WTC11 (cell line): ENCODE measurements at regions of chr3 and their contacts with region 1.

Region 1: GRCh38 chr3:31981206-31982181 is at the starts of genes OSBPL10 and ZNF860:
- DNase-seq: peak; percentile 74
- ATAC-seq: peak; percentile 79
- H3K4me3 Mint-ChIP-seq: peak within 1 kb of the TSS; percentile 92
- H3K27ac Mint-ChIP-seq: peak within 1 kb of the TSS; percentile 84
- H3K4me1 Mint-ChIP-seq: peaks cover 37% of the 10 kb centered on the region
- H3K27me3 Mint-ChIP-seq: no peaks in the 10 kb centered on the region; the same call in 1 of the 2 replicates
- CTCF ChIP-seq: no peak
- total RNA-seq, gene OSBPL10: 81.6 to 87.7 TPM (median 84.1 TPM) in 3 replicates
- total RNA-seq, gene ZNF860: 6.4 to 6.7 TPM (median 6.5 TPM) in 3 replicates

Region 2: DNA sequence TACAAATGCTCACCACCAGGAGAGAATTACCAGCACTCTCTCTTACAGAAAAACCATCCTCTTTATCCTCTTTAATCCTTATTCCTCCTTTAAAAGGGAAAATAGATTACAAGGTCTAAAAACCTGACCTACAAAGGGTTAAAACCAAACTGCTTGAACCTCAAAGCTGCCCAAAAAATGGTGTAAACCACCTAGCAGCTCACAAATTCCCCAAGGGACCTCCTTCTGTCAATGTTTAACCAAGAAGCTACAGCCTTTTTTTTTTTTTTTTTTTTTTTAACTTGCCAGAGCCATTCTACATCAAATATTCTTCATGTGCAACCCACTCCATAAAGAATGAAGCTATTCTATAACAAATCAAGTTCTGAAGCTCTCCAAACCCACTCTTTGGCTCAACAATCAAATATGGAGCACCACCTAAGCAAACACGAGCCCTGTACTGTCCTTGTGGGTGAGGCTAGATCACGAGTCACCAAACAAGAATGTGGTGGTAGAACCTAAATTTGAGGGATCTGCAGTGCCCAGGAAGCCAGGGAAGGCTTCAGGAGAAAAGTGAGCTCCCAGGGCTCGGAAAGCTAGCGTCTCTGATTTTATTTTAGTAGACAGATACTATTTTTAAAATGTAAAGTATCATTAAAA is 20.6 kb before region 1 on chr3:
- CTCF ChIA-PET with region 1: interaction called, 3 read pairs
- POLR2A ChIA-PET with region 1: interaction called, 12 read pairs
- DNase-seq: no peak
- ATAC-seq: peak; percentile 34
- H3K4me3 Mint-ChIP-seq: peak overlapping the region; percentile 75
- H3K27ac Mint-ChIP-seq: peak overlapping the region; percentile 99
- H3K4me1 Mint-ChIP-seq: peaks cover 65% of the 10 kb centered on the region
- H3K27me3 Mint-ChIP-seq: no peaks in the 10 kb centered on the region
- CTCF ChIP-seq: no peak